Breast epithelium (tissue), 4 donors: ENCODE measurements at regions of chr6 and their contacts with region 1.

Region 1: DNA sequence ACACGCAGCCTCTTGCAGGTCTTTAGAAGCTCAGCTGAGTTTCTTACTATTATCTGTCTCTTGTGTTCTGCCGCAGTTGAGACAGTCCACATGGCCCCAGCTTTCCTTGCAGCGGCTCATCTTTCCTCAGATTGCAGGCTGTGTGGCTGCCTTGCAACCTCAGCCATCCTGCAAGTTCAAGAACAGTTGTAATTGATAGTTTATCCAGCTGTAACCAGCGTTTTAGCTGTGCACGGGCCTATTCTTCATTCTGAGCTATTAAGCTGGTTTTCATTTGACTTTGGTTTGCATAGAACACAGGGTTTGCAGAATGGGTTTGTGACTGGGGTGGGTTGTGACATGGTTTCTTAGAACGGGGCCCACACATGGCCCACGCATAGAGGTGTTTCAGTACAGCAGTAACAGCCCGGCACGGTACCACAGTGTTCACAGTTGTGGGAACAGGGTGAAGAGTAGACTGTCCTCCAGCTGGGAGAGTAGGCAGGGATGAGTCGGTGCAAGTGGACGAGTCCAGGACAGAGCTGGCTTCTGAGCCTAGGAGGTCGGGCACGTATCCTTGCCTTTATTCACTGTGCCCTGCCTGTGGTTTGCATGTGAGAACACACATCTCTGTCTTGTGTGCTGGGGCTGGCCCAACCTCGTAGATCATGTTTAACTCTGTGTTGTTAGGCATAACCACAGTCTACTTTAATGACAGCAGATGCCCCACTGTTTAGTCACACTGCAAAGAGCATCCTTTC is 89.2 kb downstream of the RPP40 start:
- DNase-seq: no peak
- H3K4me3 ChIP-seq: no peak overlapping the region
- H3K27ac ChIP-seq: no peak overlapping the region
- H3K4me1 ChIP-seq: no peaks in the 10 kb centered on the region
- H3K27me3 ChIP-seq: no peaks in the 10 kb centered on the region
- CTCF ChIP-seq: no peak
- POLR2A ChIP-seq: no peak

Region 2: DNA sequence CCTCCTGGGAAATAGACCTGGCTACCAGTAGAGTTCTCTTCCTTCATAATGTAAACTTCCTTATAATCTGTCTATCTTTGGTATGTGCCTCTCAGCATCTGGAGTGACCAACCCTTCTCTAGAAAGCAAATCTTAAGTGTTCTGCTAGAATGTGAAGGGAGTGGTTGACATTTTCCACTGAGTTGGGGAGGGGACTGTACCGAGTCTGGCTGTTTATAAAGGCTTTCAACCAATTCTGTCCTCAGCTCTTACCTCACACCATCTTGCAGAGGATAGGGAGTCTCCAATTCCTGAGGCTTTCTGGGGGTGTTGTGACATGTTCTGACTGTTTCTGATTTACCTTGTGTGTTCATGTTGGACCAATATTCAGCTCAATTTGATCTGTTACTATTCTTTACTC is 875.2 kb before region 1 on chr6:
- intact Hi-C with region 1: loop called (anchors 5 kb)
- DNase-seq: no peak
- H3K4me3 ChIP-seq: no peak overlapping the region
- H3K27ac ChIP-seq: no peak overlapping the region
- H3K4me1 ChIP-seq: no peaks in the 10 kb centered on the region
- H3K27me3 ChIP-seq: no peaks in the 10 kb centered on the region
- CTCF ChIP-seq: no peak
- POLR2A ChIP-seq: no peak